Activated CD8-positive, alpha-beta T cell treated with anti-CD3 and anti-CD28 coated beads for 36 hours (primary cell): ENCODE measurements at regions of chr19 and their contacts with region 1.

Region 1: DNA sequence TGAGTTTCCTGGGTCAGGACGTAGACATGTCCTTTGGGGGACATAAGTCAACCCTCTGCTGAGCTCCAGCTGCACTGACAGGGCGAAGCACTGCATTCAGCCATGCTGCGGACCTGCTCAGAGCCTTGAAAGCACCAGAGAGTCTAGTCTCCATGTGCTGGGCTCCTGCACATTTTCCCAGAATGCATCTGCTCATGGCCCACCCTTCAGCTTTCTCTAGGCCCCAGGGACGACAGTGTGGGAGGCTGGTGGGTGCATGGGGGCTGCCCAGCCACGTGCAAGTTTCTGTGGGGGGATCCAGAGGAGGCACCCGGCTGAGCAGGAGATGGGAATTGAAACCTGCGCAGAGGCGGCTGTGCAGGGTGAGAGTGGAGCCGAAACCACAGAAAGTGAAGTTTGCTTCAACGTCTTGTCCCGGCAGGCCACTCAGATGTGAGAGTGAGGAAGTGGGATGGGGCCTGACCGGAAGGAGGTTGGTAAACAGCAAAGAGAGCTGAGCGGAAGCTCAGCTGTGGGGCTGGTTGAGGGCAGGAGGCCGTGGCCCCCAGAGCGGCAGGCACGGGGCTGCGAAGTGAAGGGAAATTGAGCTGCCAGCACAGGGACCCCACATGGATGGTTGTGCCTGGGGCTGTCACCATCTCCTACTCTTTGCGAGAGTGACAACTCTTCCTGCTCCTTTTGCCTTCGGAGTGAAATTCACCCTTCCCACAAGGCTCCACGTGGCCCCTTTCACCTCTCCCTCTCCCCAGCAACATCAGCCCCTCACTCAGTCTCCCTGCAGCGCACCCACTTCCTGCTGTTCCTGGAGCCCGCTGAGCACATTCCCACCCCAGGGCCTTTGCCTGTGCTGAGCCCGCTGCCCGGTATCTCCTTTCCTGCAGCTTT is 11.8 kb downstream of the PGLS start:
- DNase-seq: peak; percentile 89
- ATAC-seq: peak; percentile 84
- H3K4me3 Mint-ChIP-seq: peak overlapping the region; percentile 49
- H3K27ac Mint-ChIP-seq: peak overlapping the region; percentile 93
- H3K4me1 Mint-ChIP-seq: peaks cover 38% of the 10 kb centered on the region
- H3K27me3 Mint-ChIP-seq: no peaks in the 10 kb centered on the region
- CTCF ChIP-seq: no peak

Region 2: GRCh38 chr19:17511724-17512573 is 11.3 kb before region 1 on chr19:
- CTCF ChIA-PET with region 1: interaction called, 6 read pairs
- POLR2A ChIA-PET with region 1: interaction called, 26 read pairs
- intact Hi-C with region 1: no loop called
- DNase-seq: peak; percentile 96
- ATAC-seq: peak; percentile 76
- H3K4me3 Mint-ChIP-seq: peak overlapping the region; percentile 87
- H3K27ac Mint-ChIP-seq: peak overlapping the region; percentile 94
- H3K4me1 Mint-ChIP-seq: peaks cover 28% of the 10 kb centered on the region
- H3K27me3 Mint-ChIP-seq: no peaks in the 10 kb centered on the region
- CTCF ChIP-seq: no peak

Region 3: DNA sequence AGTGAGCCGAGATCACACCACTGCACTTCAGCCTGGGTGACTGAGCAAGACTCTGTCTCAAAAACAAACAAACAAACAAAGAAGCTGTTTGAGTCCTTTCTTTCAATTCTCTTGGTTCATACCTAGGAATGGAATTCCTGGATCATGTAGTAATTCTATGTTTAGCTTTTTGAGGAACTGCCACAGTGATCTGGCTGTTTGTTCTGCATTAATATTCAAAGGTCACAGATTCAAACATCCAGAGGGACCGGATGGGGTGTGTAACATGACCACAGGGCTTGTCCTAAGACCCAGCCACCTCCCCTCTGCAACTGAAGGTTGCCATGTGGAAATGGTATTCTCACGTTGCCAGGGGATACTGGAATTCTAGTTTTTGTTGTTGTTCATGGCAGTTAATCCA is 42.4 kb after region 1 on chr19:
- CTCF ChIA-PET with region 1: no interaction called
- POLR2A ChIA-PET with region 1: no interaction called
- intact Hi-C with region 1: no loop called
- DNase-seq: no peak
- ATAC-seq: no peak
- H3K4me3 Mint-ChIP-seq: no peak overlapping the region
- H3K27ac Mint-ChIP-seq: no peak overlapping the region
- H3K4me1 Mint-ChIP-seq: peaks cover 3% of the 10 kb centered on the region
- H3K27me3 Mint-ChIP-seq: no peaks in the 10 kb centered on the region
- CTCF ChIP-seq: no peak

Region 4: GRCh38 chr19:18021121-18021755 is 498.0 kb after region 1 on chr19:
- CTCF ChIA-PET with region 1: no interaction called
- POLR2A ChIA-PET with region 1: no interaction called
- intact Hi-C with region 1: no loop called
- DNase-seq: peak; percentile 80
- ATAC-seq: peak; percentile 38
- H3K4me3 Mint-ChIP-seq: peak overlapping the region; percentile 76
- H3K27ac Mint-ChIP-seq: peak overlapping the region; percentile 87
- H3K4me1 Mint-ChIP-seq: peaks cover 56% of the 10 kb centered on the region
- H3K27me3 Mint-ChIP-seq: no peaks in the 10 kb centered on the region
- CTCF ChIP-seq: no peak